CD4-positive, alpha-beta memory T cell (primary cell): ENCODE measurements at regions of chr5 and their contacts with region 1.

Region 1: DNA sequence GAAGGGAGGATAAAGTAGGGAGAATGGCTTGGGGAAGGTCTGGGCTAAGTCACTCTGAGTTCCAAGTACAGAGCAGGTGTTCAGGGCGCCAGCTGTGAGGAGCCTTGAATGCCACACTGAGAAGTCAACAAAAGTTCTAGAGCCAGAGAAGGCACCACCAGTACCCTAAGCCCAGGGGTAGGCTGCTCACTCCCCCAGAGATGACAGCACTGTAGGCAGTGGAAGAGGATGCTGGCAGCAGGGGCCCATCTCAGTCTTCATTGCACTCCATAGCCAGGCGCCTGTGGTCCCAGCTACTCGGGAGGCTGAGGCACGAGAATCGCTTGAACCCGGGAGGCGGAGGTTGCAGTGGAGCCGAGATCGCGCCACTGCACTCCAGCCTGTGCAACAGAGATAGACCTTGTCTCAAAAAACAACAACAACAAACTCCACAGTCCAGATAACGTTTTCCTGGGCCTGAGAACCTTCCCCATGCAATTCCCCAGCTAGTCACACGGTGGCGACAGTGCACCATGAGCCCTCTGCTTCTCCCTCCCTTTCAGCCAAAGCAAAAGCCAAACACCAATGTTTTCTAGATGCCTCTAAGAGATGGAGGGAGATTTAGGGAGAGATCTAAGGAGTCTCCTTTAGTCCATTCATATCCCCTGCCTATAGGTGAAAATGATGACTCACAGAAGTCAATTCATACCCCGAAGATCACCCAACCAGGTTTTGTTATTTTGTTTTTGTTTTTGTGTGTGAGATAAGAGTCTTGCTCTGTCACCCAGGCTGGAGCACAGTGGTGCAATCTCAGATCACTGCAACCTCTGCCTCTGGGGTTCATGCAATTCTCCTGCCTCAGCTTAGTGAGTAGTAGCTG is 19.8 kb upstream of the NSD1 start:
- DNase-seq: peak; percentile 71 to 80 (median 76)
- H3K4me3 ChIP-seq: no peak overlapping the region
- H3K4me3 Mint-ChIP-seq: peak overlapping the region in 1 of 8 donors; percentile 24
- H3K27ac ChIP-seq: no peak overlapping the region
- H3K27ac Mint-ChIP-seq: peak overlapping the region in 2 of 7 donors; percentile 31 to 59
- H3K4me1 ChIP-seq: peaks cover 26% of the 10 kb centered on the region
- H3K4me1 Mint-ChIP-seq: peaks cover 11 to 28% (median 17%) of the 10 kb centered on the region in 4 donors
- H3K27me3 ChIP-seq: no peaks in the 10 kb centered on the region
- H3K27me3 Mint-ChIP-seq: no peaks in the 10 kb centered on the region

Region 2: GRCh38 chr5:176660860-176661641 is 452.7 kb before region 1 on chr5:
- CTCF ChIA-PET with region 1: interaction called, 28 read pairs
- POLR2A ChIA-PET with region 1: no interaction called
- intact Hi-C with region 1: loop called (anchors 2 kb)
- DNase-seq: peak in 4 of 5 donors; percentile 76 to 78 (median 77)
- H3K4me3 ChIP-seq: no peak overlapping the region
- H3K4me3 Mint-ChIP-seq: peak overlapping the region in 4 of 8 donors; percentile 13 to 78 (median 23)
- H3K27ac ChIP-seq: no peak overlapping the region
- H3K27ac Mint-ChIP-seq: peak overlapping the region in 4 of 7 donors; percentile 37 to 90 (median 72)
- H3K4me1 ChIP-seq: peaks cover 33% of the 10 kb centered on the region
- H3K4me1 Mint-ChIP-seq: peaks cover 23 to 35% (median 31%) of the 10 kb centered on the region in 4 donors
- H3K27me3 ChIP-seq: no peaks in the 10 kb centered on the region
- H3K27me3 Mint-ChIP-seq: peaks cover 5 to 13% of the 10 kb centered on the region in 2 donors

Region 3: DNA sequence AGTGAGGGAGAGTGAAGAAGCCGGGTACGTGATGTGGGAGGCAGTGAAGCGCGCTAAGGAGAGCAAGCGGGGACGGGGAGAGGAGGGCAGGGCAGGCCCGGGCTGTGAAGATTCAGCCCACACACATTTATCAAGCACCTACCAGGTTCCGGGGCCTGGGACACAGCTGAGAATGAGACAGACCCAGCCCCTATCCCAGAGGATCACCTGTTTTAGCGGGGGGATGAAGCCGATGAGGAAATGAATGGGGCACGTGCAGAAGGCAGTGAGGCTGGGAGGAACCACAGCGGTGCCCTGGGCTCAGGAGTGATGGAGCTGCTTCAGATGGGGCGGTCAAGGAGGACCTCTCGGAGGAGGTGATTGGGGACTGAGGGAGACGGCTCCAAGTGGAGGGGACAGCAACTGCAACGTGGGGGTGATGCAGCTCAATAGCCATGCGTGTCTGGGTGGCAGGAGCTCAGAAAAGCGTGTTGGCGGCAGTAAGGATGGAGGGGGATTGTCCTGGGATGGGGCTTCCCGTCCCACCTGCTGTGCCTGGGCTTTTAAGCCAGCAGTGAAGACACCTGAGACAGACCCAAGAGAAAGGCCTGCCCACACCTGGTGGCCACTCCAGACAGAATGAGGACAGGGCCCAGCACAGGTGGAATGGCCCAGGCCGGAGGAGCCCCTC is 380.9 kb before region 1 on chr5:
- CTCF ChIA-PET with region 1: no interaction called
- POLR2A ChIA-PET with region 1: no interaction called
- intact Hi-C with region 1: no loop called
- DNase-seq: no peak
- H3K4me3 ChIP-seq: no peak overlapping the region
- H3K4me3 Mint-ChIP-seq: no peak overlapping the region
- H3K27ac ChIP-seq: no peak overlapping the region
- H3K27ac Mint-ChIP-seq: no peak overlapping the region
- H3K4me1 ChIP-seq: no peaks in the 10 kb centered on the region
- H3K4me1 Mint-ChIP-seq: no peaks in the 10 kb centered on the region
- H3K27me3 ChIP-seq: no peaks in the 10 kb centered on the region
- H3K27me3 Mint-ChIP-seq: peaks cover 11 to 32% of the 10 kb centered on the region in 2 donors

Region 4: GRCh38 chr5:177124486-177124991 is 10.7 kb after region 1 on chr5:
- CTCF ChIA-PET with region 1: interaction called, 28 read pairs
- POLR2A ChIA-PET with region 1: interaction called, 9 read pairs
- intact Hi-C with region 1: no loop called
- DNase-seq: no peak
- H3K4me3 ChIP-seq: no peak overlapping the region
- H3K4me3 Mint-ChIP-seq: peak overlapping the region in 1 of 8 donors; percentile 12
- H3K27ac ChIP-seq: no peak overlapping the region
- H3K27ac Mint-ChIP-seq: peak overlapping the region in 3 of 7 donors; percentile 6 to 45 (median 37)
- H3K4me1 ChIP-seq: peaks cover 16% of the 10 kb centered on the region
- H3K4me1 Mint-ChIP-seq: peaks cover 14 to 16% (median 16%) of the 10 kb centered on the region in 4 donors
- H3K27me3 ChIP-seq: no peaks in the 10 kb centered on the region
- H3K27me3 Mint-ChIP-seq: no peaks in the 10 kb centered on the region

Region 5: GRCh38 chr5:177232761-177233160 is 119.0 kb after region 1 on chr5:
- CTCF ChIA-PET with region 1: interaction called, 23 read pairs
- POLR2A ChIA-PET with region 1: no interaction called
- intact Hi-C with region 1: no loop called
- DNase-seq: no peak
- H3K4me3 ChIP-seq: no peak overlapping the region
- H3K4me3 Mint-ChIP-seq: no peak overlapping the region
- H3K27ac ChIP-seq: no peak overlapping the region
- H3K27ac Mint-ChIP-seq: peak overlapping the region in 5 of 7 donors; percentile 2 to 52 (median 30)
- H3K4me1 ChIP-seq: no peaks in the 10 kb centered on the region
- H3K4me1 Mint-ChIP-seq: peaks cover 14 to 42% (median 28%) of the 10 kb centered on the region in 4 donors
- H3K27me3 ChIP-seq: no peaks in the 10 kb centered on the region
- H3K27me3 Mint-ChIP-seq: no peaks in the 10 kb centered on the region

Region 6: DNA sequence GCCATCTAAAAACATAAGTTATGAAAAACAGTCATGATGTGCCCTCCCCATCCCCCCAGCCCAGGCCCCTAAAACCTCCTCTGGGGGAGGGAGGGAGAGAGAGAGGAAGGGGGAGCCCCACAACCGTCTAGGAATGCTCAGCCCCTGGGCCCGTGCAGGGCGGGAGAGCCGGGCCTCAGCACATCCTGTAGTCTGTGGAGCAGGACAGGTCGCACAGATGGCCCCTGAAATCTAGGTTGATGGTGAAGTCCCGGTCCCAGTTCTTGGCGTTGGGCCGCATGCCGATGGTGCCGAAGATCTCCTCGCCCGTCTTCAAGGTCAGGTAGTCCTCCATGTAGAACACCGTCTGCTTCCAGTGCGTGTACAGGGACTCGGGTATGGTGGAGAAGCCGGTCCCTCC is 151.6 kb after region 1 on chr5:
- CTCF ChIA-PET with region 1: interaction called, 14 read pairs
- POLR2A ChIA-PET with region 1: no interaction called
- intact Hi-C with region 1: no loop called
- DNase-seq: no peak
- H3K4me3 ChIP-seq: no peak overlapping the region
- H3K4me3 Mint-ChIP-seq: no peak overlapping the region
- H3K27ac ChIP-seq: no peak overlapping the region
- H3K27ac Mint-ChIP-seq: no peak overlapping the region
- H3K4me1 ChIP-seq: no peaks in the 10 kb centered on the region
- H3K4me1 Mint-ChIP-seq: peaks cover 0 to 4% (median 2%) of the 10 kb centered on the region in 4 donors
- H3K27me3 ChIP-seq: no peaks in the 10 kb centered on the region
- H3K27me3 Mint-ChIP-seq: no peaks in the 10 kb centered on the region

Region 7: GRCh38 chr5:177311723-177312648 is 198.2 kb after region 1 on chr5 and contains the start of gene MXD3:
- CTCF ChIA-PET with region 1: interaction called, 33 read pairs
- POLR2A ChIA-PET with region 1: no interaction called
- intact Hi-C with region 1: no loop called
- DNase-seq: peak; percentile 90 to 96 (median 93)
- H3K4me3 ChIP-seq: peak within 1 kb of the TSS; percentile 24 to 64
- H3K4me3 Mint-ChIP-seq: peak within 1 kb of the TSS; percentile 70 to 86 (median 80)
- H3K27ac ChIP-seq: peak within 1 kb of the TSS; percentile 49
- H3K27ac Mint-ChIP-seq: peak within 1 kb of the TSS; percentile 29 to 83 (median 75)
- H3K4me1 ChIP-seq: peaks cover 41% of the 10 kb centered on the region
- H3K4me1 Mint-ChIP-seq: peaks cover 17 to 49% (median 30%) of the 10 kb centered on the region in 4 donors
- H3K27me3 ChIP-seq: no peaks in the 10 kb centered on the region
- H3K27me3 Mint-ChIP-seq: no peaks in the 10 kb centered on the region
- total RNA-seq, gene MXD3: 17.3 TPM